Heart left ventricle (tissue), 16 donors: ENCODE measurements at regions of chr18 and their contacts with region 1.

Region 1: DNA sequence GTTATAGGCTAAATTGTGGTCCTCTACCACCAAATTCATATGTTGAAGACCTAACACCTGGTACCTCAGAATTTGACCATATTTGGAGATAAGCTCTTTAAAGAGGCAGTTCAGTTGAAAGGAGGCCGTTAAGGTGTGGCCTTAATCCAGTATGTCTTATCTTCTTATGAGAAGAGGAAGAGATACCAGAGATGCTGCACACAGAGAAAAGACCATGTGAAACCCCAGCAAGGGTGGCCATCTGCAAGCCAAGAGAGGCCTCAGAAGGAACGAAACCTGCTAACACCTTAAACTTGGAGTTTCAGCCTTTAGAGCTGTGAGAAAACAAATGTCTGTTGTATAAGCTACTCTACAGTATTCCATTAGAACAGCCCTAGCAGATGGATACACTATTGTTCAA is 528.1 kb upstream of the DCC start:
- DNase-seq: no peak
- ATAC-seq: no peak
- H3K4me3 ChIP-seq: no peak overlapping the region
- H3K27ac ChIP-seq: no peak overlapping the region
- H3K4me1 ChIP-seq: no peaks in the 10 kb centered on the region
- H3K27me3 ChIP-seq: no peaks in the 10 kb centered on the region
- CTCF ChIP-seq: no peak
- POLR2A ChIP-seq: no peak

Region 2: DNA sequence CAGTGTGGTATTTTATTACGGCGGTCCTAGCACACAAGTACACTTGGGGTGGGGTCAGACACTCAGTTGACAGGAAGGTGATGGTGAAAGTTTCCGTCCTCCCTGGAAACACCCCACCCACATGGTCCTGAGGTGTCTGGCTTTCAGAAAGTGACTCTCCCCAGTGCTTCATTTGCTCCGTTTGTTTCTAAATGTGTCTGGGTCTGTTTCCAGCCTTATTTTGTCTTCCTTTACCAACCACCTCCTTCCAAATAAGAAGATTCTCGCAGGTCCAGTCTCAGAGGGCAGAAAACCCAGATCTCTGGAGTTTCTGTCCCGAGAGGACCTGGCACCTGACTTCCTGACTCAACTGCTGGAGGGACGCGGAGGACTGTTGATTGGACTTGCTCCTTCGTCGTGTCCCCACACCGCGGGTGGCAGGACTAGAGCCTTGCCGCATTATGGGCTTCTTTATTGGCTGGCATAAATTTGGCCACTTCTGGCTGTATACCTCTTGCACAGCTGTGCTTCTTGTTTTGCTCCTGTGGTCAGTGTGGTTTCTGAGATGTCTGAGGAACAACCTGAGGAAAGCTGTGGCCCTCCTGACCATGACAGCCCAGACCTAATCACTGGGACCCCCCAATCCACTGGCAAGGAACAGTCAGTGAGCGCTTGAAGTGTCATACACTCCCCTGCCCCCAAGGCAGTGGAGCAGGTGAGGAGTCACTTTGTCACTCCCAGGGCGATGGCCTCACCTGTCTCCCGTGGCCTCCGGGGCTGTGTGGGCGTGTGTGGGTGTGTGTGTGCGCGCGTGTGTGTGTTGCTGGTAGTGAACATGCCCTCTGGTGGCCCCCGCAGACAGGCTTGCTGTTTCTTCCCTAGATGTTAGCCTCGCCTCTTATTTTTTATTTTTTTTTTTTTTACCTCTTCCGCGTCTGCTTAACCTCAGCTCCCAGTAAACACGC is 660.0 kb before region 1 on chr18:
- intact Hi-C with region 1: no loop called
- DNase-seq: no peak
- ATAC-seq: no peak
- H3K4me3 ChIP-seq: no peak overlapping the region
- H3K27ac ChIP-seq: peak overlapping the region in 1 of 12 donors; percentile 32
- H3K4me1 ChIP-seq: peaks cover 0 to 7% (median 0%) of the 10 kb centered on the region in 12 donors
- H3K27me3 ChIP-seq: no peaks in the 10 kb centered on the region
- CTCF ChIP-seq: no peak
- POLR2A ChIP-seq: no peak

Region 3: DNA sequence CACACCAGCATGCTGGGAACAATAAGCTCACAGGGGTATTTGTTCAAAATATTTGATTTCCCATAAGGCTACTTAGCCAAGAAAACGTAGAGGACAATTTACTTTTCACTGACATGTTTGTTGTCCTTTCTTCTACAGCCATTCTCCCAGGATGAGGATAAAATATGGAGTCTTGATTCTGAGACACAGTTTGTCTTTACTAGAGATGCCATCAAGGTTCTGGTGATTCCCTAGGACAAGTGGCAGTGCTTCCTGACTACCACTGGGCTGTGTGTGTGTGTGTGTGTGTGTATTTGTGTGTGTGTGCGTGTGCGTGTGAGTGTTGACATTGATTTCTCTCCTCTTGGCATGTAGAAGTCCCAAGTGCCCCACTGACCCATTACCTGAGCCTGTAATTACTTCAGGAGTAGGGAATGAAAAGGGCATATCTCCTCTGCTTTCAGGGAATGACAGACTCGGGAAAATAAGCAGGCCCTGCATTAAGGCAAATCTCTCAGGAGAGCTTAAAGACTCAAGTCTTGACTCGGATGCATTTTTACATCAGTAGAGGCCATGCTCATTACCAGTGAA is 1289.7 kb after region 1 on chr18:
- intact Hi-C with region 1: loop called in 1 of 10 experiments (anchors 10 kb)
- DNase-seq: no peak
- ATAC-seq: no peak
- H3K4me3 ChIP-seq: no peak overlapping the region
- H3K27ac ChIP-seq: no peak overlapping the region
- H3K4me1 ChIP-seq: no peaks in the 10 kb centered on the region
- H3K27me3 ChIP-seq: no peaks in the 10 kb centered on the region
- CTCF ChIP-seq: no peak
- POLR2A ChIP-seq: no peak